Activated B cell treated with CpG ODN at 0.5 μM for 24 hours (primary cell): ENCODE measurements at regions of chr9 and their contacts with region 1.

Region 1: DNA sequence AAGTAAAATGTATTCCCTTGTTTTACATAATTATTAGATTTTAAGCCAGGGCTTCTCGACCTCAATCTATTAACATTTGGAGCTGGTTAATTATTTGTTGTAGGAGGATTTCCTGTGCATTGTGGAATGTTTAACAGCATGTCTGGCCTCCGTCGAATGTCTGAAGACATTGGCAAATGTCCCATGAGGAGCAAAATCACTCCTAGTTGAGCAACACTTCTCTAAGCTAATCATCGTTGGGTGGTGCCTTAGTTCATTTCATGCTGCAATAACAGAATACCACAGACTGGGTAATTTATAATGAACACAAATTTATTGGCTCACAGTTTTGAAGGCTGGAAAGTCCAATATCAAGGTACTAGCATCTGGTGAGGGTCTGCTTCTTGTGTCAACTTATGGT is 13.4 kb upstream of the VPS13A start:
- DNase-seq: no peak
- ATAC-seq: no peak
- H3K4me3 Mint-ChIP-seq: no peak overlapping the region
- H3K27ac Mint-ChIP-seq: no peak overlapping the region
- H3K4me1 Mint-ChIP-seq: no peaks in the 10 kb centered on the region
- H3K27me3 Mint-ChIP-seq: peaks cover 14% of the 10 kb centered on the region
- CTCF ChIP-seq: no peak

Region 2: DNA sequence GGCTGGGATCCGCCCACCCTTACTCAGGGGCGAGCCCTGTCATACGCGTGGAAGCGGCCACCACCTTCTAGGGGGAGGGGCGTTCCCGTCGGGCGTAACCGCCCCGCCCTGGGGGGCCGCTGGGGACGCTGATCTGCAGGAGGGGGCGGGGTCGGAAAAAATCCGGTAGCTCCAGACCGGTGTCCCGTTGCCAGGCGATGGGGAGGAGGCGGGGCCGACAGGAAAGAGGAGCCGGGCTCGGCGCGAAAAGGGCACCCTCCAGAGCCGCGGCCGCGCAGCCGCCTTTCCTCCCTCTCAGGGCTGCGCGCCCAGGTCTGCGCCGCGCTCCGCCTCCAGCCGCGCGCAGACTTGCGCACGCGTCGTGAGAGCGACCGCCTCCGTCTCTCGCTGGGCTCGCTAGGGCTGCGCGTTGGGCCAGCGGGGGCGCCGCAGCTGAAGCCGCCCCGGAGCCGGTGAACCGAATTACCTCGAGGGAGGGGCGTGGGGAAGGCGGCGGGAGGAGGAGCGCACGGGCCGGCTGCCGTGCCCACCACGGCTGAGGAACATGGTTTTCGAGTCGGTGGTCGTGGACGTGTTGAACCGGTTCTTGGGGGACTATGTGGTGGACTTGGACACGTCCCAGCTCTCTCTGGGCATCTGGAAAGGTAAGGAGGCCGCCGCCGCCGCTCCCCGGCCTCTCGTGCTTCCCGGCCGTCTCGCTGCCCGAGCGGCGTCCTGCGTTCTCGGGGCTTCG is 13.4 kb after region 1 on chr9 and contains the start of gene VPS13A:
- CTCF ChIA-PET with region 1: interaction called, 26 read pairs
- POLR2A ChIA-PET with region 1: interaction called, 3 read pairs
- intact Hi-C with region 1: loop called (anchors 1 kb)
- DNase-seq: peak; percentile 92
- ATAC-seq: peak; percentile 82
- H3K4me3 Mint-ChIP-seq: peak within 1 kb of the TSS; percentile 92
- H3K27ac Mint-ChIP-seq: peak within 1 kb of the TSS; percentile 83
- H3K4me1 Mint-ChIP-seq: peaks cover 29% of the 10 kb centered on the region
- H3K27me3 Mint-ChIP-seq: no peaks in the 10 kb centered on the region
- CTCF ChIP-seq: no peak
- total RNA-seq, gene VPS13A: 58.0 and 69.8 TPM in 2 replicates

Region 3: DNA sequence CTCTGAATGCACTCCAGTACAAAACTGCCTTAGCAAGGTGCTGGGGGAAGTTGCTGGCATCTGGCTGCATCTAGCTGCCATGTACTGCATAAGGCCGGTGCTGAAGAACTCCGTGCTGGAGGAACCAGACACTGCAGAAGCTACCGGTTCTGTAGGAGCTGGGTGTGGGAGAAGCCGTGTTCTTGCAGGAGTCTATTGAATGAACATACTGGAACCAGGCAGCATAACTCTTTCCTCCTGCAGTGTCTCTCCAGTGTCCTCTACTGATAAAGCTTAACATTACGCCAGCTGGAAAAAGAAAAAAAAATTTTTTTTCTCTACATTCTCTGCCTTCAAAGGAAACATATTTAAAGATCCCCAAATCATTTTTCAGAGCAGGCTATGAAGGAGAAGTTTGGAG is 52.0 kb after region 1 on chr9:
- CTCF ChIA-PET with region 1: interaction called, 10 read pairs
- POLR2A ChIA-PET with region 1: no interaction called
- intact Hi-C with region 1: loop called (anchors 1 kb)
- DNase-seq: no peak
- ATAC-seq: no peak
- H3K4me3 Mint-ChIP-seq: no peak overlapping the region
- H3K27ac Mint-ChIP-seq: no peak overlapping the region
- H3K4me1 Mint-ChIP-seq: no peaks in the 10 kb centered on the region
- H3K27me3 Mint-ChIP-seq: no peaks in the 10 kb centered on the region
- CTCF ChIP-seq: no peak

Region 4: GRCh38 chr9:77236693-77237092 is 72.8 kb after region 1 on chr9:
- CTCF ChIA-PET with region 1: no interaction called
- POLR2A ChIA-PET with region 1: no interaction called
- intact Hi-C with region 1: loop called (anchors 5 kb)
- DNase-seq: no peak
- ATAC-seq: no peak
- H3K4me3 Mint-ChIP-seq: no peak overlapping the region
- H3K27ac Mint-ChIP-seq: no peak overlapping the region
- H3K4me1 Mint-ChIP-seq: no peaks in the 10 kb centered on the region
- H3K27me3 Mint-ChIP-seq: no peaks in the 10 kb centered on the region
- CTCF ChIP-seq: no peak

Region 5: DNA sequence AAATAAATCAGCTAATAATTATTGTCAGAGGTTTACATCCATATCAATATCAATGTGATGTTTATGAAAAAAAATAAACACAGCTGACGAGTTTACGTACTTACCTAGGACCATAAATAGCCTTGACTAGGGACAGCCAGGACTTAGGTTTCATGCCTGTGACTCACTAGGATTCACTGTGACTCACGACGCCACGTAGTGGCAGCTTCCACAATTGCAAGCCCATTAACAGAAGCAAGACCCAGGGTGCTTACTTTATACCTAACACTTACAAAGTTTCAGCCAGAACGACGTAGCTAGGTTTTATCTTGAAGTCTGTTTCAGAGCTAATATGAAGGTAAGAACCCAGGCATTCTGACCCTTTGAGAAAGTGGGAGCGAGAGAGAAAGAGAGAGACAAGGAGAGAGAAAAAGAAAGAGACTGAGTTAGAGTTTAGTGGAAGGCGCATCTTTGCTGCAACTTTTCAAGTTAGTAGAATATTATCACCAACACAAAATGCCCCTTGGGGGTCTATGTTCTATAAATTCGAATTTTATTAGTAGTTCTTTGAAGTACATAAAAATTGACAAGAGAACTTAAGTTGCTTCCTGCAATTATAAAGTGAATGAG is 293.0 kb after region 1 on chr9:
- CTCF ChIA-PET with region 1: interaction called, 27 read pairs
- POLR2A ChIA-PET with region 1: no interaction called
- intact Hi-C with region 1: loop called (anchors 1 kb)
- DNase-seq: peak; percentile 59
- ATAC-seq: peak; percentile 85
- H3K4me3 Mint-ChIP-seq: no peak overlapping the region
- H3K27ac Mint-ChIP-seq: no peak overlapping the region
- H3K4me1 Mint-ChIP-seq: peaks cover 6% of the 10 kb centered on the region
- H3K27me3 Mint-ChIP-seq: peaks cover 4% of the 10 kb centered on the region
- CTCF ChIP-seq: no peak

Region 6: DNA sequence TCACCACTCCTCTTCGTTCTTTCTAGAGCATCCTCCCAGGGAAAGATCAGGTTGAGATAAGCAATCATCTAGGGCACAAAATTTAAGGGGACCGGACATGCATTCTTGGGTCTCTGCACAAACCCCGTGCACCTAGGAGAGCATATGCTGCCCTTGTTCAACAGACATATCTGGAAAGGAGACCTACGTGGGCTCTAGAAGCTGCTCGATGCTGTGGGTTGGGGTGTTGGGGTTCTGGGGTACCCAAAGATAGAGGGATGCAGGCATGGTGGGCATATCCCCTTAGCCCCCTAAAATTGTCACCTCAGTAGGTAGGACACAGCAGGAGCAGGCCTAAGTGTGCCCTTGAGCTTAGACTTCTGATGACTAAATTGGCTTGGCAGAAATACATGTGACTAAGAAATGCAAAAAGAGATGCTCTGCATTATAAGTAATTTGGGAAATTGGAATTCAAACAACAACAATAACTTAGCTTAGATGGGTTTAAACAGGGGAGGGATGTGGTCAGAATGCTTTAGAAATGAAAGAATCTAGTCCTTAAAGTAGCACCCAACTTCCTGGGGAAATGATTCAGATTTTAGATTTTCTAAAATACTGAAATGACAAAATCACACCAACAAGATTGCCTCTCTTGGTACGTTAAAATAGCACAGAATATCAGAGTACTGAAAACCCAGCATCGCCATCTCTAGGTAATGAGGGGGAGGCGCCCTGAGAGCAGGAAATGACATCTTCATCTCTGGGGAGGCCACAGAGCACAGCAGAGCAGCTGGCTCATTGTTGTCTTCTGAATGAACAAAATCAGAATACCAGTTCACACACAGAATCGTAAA is 312.0 kb after region 1 on chr9:
- CTCF ChIA-PET with region 1: no interaction called
- POLR2A ChIA-PET with region 1: no interaction called
- intact Hi-C with region 1: no loop called
- DNase-seq: no peak
- ATAC-seq: peak; percentile 49
- H3K4me3 Mint-ChIP-seq: no peak overlapping the region
- H3K27ac Mint-ChIP-seq: no peak overlapping the region
- H3K4me1 Mint-ChIP-seq: peaks cover 8% of the 10 kb centered on the region
- H3K27me3 Mint-ChIP-seq: no peaks in the 10 kb centered on the region
- CTCF ChIP-seq: no peak

Region 7: DNA sequence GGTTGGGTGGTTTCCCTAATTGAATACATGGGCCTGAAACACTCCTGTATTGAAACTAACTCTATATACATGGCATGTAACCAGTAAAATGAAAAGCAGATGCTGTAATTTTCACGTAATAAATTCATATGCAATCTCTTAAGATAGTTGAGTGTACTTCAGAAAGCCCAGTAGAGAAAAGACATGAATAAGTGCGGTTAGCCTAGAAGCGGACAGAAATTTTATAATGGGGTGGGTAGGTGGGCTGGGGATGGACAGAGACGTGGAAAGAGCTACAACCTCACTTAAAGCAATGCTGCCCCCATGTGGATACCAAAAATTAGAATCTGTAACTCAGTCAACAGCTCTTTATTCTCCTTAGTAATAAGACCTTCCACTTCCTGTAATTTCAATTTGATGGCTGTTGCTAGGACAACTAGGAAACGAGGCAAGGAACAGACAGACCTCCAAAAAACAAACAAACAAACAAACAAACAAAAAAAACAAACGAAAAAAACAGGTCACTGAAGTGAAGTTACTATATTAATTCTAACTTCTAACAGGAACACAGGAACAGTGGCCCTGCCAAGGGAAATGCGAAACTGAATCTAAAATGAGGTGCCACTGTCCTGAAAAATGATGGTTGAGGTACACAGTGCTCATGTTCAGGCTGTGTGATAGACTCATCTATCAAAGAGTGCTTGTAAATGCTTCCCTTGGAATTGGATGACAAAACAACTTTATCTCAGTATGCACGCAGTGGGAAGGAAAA is 587.6 kb after region 1 on chr9:
- CTCF ChIA-PET with region 1: interaction called, 5 read pairs
- POLR2A ChIA-PET with region 1: no interaction called
- intact Hi-C with region 1: loop called (anchors 5 kb)
- DNase-seq: no peak
- ATAC-seq: no peak
- H3K4me3 Mint-ChIP-seq: no peak overlapping the region
- H3K27ac Mint-ChIP-seq: no peak overlapping the region
- H3K4me1 Mint-ChIP-seq: no peaks in the 10 kb centered on the region
- H3K27me3 Mint-ChIP-seq: no peaks in the 10 kb centered on the region
- CTCF ChIP-seq: no peak

Region 8: GRCh38 chr9:77944556-77945243 is 780.8 kb after region 1 on chr9:
- CTCF ChIA-PET with region 1: no interaction called
- POLR2A ChIA-PET with region 1: no interaction called
- intact Hi-C with region 1: no loop called
- DNase-seq: no peak
- ATAC-seq: no peak
- H3K4me3 Mint-ChIP-seq: no peak overlapping the region
- H3K27ac Mint-ChIP-seq: no peak overlapping the region
- H3K4me1 Mint-ChIP-seq: peaks cover 9% of the 10 kb centered on the region
- H3K27me3 Mint-ChIP-seq: peaks cover 3% of the 10 kb centered on the region
- CTCF ChIP-seq: no peak

Region 9: GRCh38 chr9:78035383-78035993 is 871.6 kb after region 1 on chr9:
- CTCF ChIA-PET with region 1: no interaction called
- POLR2A ChIA-PET with region 1: no interaction called
- intact Hi-C with region 1: loop called (anchors 5 kb)
- DNase-seq: no peak
- ATAC-seq: no peak
- H3K4me3 Mint-ChIP-seq: no peak overlapping the region
- H3K27ac Mint-ChIP-seq: no peak overlapping the region
- H3K4me1 Mint-ChIP-seq: peaks cover 17% of the 10 kb centered on the region
- H3K27me3 Mint-ChIP-seq: peaks cover 45% of the 10 kb centered on the region
- CTCF ChIP-seq: no peak